ENCODE measurements at regions of chr5 and their contacts with region 1.

Region 1: DNA sequence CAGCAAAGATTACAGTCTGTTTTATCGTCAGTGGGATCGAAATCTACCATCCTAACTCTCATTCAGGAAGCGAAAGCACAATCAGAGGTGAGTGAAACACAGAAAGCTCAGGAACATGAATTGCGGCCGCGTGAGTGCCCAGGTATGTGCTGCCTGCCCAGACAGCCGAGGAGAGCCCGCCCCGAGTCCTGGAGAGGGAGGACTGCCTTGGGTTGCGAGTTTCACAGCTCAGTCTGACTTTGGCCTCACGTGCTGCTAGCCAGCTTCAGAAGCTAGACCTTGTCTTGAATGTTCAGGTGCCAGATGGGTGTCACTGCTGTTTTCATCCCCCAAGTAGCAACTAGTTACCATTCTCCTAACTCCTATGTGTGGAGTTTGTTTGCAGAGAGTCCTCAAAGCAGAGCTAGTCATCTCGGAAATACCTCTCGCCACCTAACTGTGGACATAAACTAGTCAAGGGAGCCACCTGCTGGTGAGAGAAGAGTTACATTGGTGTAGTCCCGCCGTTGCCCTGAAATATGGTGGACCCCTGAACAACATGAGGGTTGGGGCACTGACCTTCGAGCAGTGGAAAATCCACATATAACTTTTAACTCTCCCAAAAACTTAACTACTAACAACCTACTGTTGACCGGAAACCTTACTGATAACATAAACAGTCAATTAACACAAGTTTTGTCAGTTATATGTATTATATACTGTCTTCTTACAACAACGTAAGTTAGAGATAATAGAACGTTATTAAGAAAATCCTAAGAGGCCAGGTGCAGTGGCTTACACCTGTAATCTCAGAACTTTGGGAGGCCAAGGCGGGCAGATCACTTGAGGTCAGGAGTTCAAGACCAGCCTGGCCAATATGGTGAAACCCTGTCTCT is 80.9 kb downstream of the GOLPH3 start:
- DNase-seq: peak; percentile 72
- H3K4me3 Mint-ChIP-seq: no peak overlapping the region
- H3K27ac Mint-ChIP-seq: no peak overlapping the region
- H3K4me1 Mint-ChIP-seq: peaks cover 5% of the 10 kb centered on the region
- H3K27me3 Mint-ChIP-seq: no peaks in the 10 kb centered on the region

Region 2: DNA sequence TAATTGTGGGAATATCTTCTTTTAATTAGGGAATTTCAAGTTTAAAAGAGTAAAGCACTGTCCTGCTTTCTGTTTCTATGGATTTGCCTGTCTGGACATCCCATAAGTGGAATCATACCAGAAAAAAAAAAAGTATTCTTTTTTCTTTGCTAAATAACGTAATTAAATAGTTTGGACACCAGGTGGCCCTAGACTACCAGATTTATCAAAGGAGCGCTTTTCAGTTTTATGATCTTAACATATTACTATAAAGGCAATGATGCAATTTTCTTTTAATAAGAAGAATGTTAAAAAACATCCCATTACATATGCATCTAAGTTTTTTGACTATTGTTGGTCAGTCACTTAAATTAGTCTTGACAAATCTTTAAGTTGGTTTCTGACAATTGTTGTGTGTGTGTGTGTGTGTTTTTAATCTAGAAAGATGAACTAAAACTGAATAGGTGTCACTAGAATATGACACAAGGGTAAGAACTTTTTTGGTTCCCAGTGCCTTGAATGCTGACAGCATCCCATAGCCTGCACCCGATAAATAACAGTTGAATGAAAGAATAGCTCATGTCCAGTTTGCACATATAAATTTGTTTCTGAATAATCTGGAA is 511.6 kb before region 1 on chr5:
- CTCF ChIA-PET with region 1: interaction called, 10 read pairs
- POLR2A ChIA-PET with region 1: no interaction called
- intact Hi-C with region 1: loop called (anchors 1 kb)
- DNase-seq: no peak
- H3K4me3 Mint-ChIP-seq: no peak overlapping the region
- H3K27ac Mint-ChIP-seq: no peak overlapping the region
- H3K4me1 Mint-ChIP-seq: no peaks in the 10 kb centered on the region
- H3K27me3 Mint-ChIP-seq: peaks cover 12% of the 10 kb centered on the region

Region 3: DNA sequence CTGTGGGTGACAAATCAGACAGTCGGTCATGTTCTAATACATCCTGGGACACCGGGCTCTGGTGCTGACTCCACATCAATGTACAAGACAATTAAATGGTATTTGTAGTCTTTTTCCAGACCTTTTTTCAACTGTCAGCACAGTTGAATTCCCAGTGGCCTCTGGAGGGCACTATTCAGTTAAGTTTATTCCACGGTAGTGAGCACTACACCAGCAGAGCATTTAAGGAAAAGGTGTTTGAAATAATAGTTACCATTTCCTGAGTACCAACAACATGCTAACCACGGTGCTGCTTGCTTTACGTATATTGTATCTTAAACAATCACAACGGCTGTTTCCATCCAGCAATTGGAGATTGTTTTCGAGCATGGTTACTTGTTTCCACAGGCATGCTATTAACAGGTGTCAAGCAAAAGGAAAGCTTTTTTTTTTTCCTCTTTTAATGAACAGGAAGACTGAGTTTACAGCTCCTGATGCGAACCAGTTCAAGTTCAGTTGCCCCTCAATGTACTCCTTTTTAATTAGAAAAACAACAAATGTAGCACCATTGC is 267.6 kb before region 1 on chr5:
- CTCF ChIA-PET with region 1: interaction called, 24 read pairs
- POLR2A ChIA-PET with region 1: no interaction called
- intact Hi-C with region 1: loop called (anchors 1 kb)
- DNase-seq: peak; percentile 37
- H3K4me3 Mint-ChIP-seq: no peak overlapping the region
- H3K27ac Mint-ChIP-seq: no peak overlapping the region
- H3K4me1 Mint-ChIP-seq: no peaks in the 10 kb centered on the region
- H3K27me3 Mint-ChIP-seq: peaks cover 7% of the 10 kb centered on the region

Region 4: GRCh38 chr5:32076699-32077695 is 16.2 kb before region 1 on chr5:
- CTCF ChIA-PET with region 1: interaction called, 13 read pairs
- POLR2A ChIA-PET with region 1: no interaction called
- intact Hi-C with region 1: no loop called
- DNase-seq: peak; percentile 47
- H3K4me3 Mint-ChIP-seq: no peak overlapping the region
- H3K27ac Mint-ChIP-seq: no peak overlapping the region
- H3K4me1 Mint-ChIP-seq: peaks cover 3% of the 10 kb centered on the region
- H3K27me3 Mint-ChIP-seq: no peaks in the 10 kb centered on the region

Region 5: DNA sequence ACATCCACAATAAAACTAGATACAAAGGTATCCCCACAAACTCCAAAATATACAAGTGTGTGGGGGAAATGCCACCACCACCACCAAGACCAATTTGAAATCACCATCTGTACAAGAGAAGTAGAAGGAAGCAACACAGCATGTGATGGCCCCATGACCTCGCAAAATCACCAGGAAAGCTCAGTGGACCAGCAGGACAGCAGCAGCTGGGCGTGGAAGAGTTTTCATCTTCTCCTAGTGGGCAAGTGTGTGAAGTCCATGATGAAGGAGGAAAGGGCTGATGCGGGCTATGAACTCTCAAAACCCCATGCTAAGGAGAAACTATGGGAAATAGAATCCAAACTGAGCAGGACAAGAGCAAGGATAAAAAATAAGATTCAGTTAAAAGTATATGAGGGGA is 22.8 kb after region 1 on chr5:
- CTCF ChIA-PET with region 1: interaction called, 10 read pairs
- POLR2A ChIA-PET with region 1: no interaction called
- intact Hi-C with region 1: no loop called
- DNase-seq: no peak
- H3K4me3 Mint-ChIP-seq: no peak overlapping the region
- H3K27ac Mint-ChIP-seq: peak overlapping the region; percentile 29
- H3K4me1 Mint-ChIP-seq: peaks cover 41% of the 10 kb centered on the region
- H3K27me3 Mint-ChIP-seq: no peaks in the 10 kb centered on the region

Region 6: DNA sequence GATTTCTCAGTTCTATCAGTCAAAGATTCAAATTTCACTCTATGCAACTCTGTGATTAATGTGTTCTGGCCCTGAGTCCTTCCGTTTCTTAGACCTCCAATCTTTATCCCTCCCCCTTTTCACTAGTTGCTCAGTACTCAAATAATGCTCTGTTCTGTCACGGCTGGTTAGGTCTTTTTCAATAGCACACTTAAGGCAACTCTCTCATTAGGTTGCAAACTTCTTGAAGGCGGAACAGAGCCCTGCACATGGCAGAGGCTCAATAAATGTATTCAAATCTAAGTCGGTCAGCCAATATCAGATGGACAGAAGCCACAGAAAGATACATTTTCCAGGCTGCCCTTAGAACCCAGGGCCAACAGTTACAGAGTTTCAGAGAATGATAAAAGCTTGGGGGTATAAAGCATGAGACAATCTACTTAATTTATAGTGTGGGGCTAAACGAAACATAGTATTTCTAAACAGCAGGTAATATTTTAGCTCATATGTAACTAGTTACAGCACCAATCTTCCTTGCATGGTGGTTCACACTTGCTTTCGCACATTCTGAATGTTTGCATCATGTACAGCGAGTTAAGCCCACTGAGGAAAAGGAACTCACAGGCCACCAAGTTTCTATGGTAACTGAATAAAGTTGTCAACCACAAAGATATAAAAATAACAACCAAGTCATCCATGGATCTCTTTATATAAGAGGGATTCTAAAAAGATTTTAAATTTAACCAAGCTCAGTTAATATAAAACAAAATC is 148.0 kb after region 1 on chr5:
- CTCF ChIA-PET with region 1: no interaction called
- POLR2A ChIA-PET with region 1: no interaction called
- intact Hi-C with region 1: no loop called
- DNase-seq: no peak
- H3K4me3 Mint-ChIP-seq: no peak overlapping the region
- H3K27ac Mint-ChIP-seq: no peak overlapping the region
- H3K4me1 Mint-ChIP-seq: no peaks in the 10 kb centered on the region
- H3K27me3 Mint-ChIP-seq: no peaks in the 10 kb centered on the region

Measured in activated CD4-positive, alpha-beta memory T cell treated with anti-CD3 and anti-CD28 coated beads for 36 hours (primary cell).